IMR-90 (cell line): ENCODE measurements at regions of chr3 and their contacts with region 1.

Region 1: DNA sequence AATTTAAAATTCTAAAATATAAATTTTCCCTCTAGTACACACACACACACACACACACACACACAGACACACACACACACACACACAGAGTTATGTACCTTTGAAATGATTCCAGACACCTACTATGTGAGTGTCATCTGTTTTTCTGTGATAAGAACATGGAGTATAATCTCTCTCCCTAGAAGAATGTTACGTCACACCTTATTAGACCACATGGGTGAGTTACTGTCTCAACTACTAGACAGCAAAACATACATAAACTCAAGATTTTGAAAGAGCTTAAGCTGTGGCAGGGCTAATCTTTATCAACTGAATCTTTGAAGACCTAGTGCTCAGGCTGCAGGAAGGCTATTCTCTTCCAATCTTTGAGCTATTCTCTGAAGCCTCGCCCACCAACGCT is 385.9 kb upstream of the BCHE start:
- DNase-seq: no peak
- ATAC-seq: no peak
- H3K4me3 ChIP-seq: no peak overlapping the region
- H3K27ac ChIP-seq: no peak overlapping the region
- H3K4me1 ChIP-seq: no peaks in the 10 kb centered on the region
- H3K27me3 ChIP-seq: no peaks in the 10 kb centered on the region
- CTCF ChIP-seq: no peak
- POLR2A ChIP-seq: no peak
- RAD21 ChIP-seq: no peak

Region 2: DNA sequence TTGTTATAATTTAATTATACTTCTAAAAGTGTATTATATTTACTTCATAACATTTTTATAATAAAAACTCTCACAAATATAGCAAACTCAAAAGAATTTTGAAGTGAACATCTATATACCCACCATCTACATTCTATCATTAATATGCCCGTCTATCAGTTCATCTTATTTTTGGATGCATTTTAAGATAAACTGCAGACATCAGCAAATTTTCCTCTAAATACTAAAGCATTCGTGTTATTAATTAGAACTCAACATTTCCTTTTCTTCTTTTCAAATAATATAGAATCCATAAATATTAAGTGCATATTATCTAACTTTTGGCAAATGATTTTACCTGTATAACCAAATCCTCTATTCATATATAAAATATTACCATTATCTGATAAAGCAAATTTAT is 143.0 kb before region 1 on chr3:
- CTCF ChIA-PET with region 1: no interaction called
- POLR2A ChIA-PET with region 1: no interaction called
- dilution Hi-C with region 1: no loop called
- in situ Hi-C with region 1: no loop called
- intact Hi-C with region 1: no loop called
- DNase-seq: no peak
- ATAC-seq: no peak
- H3K4me3 ChIP-seq: no peak overlapping the region
- H3K27ac ChIP-seq: no peak overlapping the region
- H3K4me1 ChIP-seq: no peaks in the 10 kb centered on the region
- H3K27me3 ChIP-seq: no peaks in the 10 kb centered on the region
- CTCF ChIP-seq: no peak
- POLR2A ChIP-seq: no peak
- RAD21 ChIP-seq: no peak

Region 3: DNA sequence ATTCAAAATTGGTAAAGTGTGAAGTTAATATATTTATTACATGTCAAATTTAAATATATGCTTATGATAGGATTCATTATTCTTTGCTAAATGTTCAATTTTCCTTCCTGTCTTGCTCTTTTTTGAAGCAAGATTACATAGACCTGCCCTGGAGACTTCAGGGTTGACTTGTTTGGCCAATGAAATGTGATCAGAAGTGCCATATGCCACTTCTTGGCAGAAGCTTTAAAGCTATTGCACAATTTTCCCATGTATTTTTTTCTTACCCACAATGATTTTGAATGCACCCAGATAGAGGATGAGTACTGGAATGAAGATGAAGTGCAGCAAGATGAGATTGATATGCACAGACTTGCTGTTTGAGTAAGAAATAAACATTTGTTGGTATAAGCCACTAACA is 20.4 kb after region 1 on chr3:
- CTCF ChIA-PET with region 1: no interaction called
- POLR2A ChIA-PET with region 1: no interaction called
- dilution Hi-C with region 1: no loop called
- in situ Hi-C with region 1: no loop called
- intact Hi-C with region 1: loop called (anchors 2 kb)
- DNase-seq: no peak
- ATAC-seq: no peak
- H3K4me3 ChIP-seq: no peak overlapping the region
- H3K27ac ChIP-seq: no peak overlapping the region
- H3K4me1 ChIP-seq: no peaks in the 10 kb centered on the region
- H3K27me3 ChIP-seq: no peaks in the 10 kb centered on the region
- CTCF ChIP-seq: no peak
- POLR2A ChIP-seq: no peak
- RAD21 ChIP-seq: no peak

Region 4: GRCh38 chr3:166607933-166608521 is 384.9 kb after region 1 on chr3:
- CTCF ChIA-PET with region 1: no interaction called
- POLR2A ChIA-PET with region 1: no interaction called
- dilution Hi-C with region 1: no loop called
- in situ Hi-C with region 1: no loop called
- intact Hi-C with region 1: no loop called
- DNase-seq: no peak
- ATAC-seq: no peak
- H3K4me3 ChIP-seq: no peak overlapping the region
- H3K27ac ChIP-seq: no peak overlapping the region
- H3K4me1 ChIP-seq: no peaks in the 10 kb centered on the region
- H3K27me3 ChIP-seq: no peaks in the 10 kb centered on the region
- CTCF ChIP-seq: no peak
- POLR2A ChIP-seq: no peak
- RAD21 ChIP-seq: no peak